Cardiac septum (tissue), 1 donor: ENCODE measurements at regions of chr20 and their contacts with region 1.

Region 1: GRCh38 chr20:34083137-34083536 is 28.9 kb downstream of the EIF2S2 start:
- DNase-seq: peak; percentile 85

Region 2: DNA sequence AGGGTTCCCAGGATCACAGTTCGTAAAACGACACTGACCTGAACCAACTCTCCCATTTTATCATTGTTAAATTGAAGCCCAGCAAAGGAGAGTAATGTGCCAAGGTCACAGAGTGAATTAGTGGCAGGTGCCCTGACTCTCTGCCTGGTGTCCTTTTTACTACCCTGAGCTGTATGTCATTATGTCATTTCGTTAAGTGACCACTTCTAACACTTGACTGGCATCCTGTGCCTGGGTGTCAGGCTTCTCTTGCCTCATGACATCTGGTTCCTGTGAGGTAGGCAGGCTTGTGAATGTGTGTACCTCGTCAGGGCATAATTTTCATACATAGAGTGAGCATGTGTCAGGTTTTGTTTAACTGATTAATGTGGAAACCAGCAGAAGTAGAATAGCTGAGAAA is 40.9 kb before region 1 on chr20:
- intact Hi-C with region 1: loop called (anchors 2 kb)
- DNase-seq: no peak

Region 3: GRCh38 chr20:34190679-34191090 is 107.5 kb after region 1 on chr20:
- intact Hi-C with region 1: no loop called
- DNase-seq: no peak